Dendritic cell treated with granulocyte-macrophage colony-stimulating factor and Interleukin-4, amounts not matched to agents 40 ng/mL and 50 ng/mL, for 4 days (primary cell): ENCODE measurements at regions of chr16 and their contacts with region 1.

Region 1: DNA sequence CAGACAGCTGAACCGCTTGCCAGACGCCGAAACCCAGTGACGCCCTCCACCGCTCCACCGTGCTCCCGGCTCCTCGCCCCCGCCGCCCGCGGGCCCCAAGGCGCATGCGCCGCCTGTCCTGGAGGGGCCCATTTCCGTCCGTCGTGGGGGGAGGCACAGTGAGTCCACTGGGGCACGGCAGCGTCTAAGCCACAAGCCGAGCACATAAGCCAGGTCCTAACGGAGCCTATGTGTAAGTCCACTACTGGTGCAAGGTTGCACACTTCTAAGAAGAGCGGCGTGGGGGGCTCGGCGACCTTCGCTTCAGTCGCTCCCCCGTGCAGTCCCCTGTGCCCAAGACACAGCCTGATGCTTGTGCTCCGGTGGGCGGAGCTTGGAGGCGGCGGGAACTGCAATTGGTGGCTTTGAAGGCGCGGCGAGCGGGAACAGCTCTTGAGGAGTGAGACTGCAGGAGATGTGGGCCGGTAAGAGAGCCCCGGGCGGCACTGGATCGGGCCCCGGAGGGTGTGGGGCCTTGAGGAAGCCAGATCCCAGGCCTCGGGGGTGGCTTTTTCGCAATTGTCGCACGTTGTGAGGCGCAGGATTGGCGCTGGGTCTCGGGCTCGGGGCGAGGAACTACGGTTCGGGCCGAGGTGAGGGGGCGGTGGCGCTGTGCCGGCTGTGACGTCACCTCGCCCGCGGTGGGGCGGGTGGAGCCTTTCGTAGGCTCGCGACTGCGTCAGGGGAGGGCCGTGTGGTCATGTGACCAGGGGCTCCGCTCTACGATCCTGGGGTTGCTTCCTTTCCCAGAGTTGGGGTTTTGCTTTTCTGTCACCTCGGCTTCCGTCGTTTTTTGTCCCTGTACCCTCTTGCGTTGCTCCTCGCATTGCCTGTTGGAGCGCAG is at the starts of genes CENPN and CMC2:
- H3K4me3 Mint-ChIP-seq: peak within 1 kb of the TSS; percentile 96
- H3K27ac Mint-ChIP-seq: peak within 1 kb of the TSS; percentile 99
- H3K4me1 Mint-ChIP-seq: peaks cover 44% of the 10 kb centered on the region
- H3K27me3 Mint-ChIP-seq: no peaks in the 10 kb centered on the region

Region 2: GRCh38 chr16:80174418-80174817 is 832.6 kb before region 1 on chr16:
- intact Hi-C with region 1: no loop called
- H3K4me3 Mint-ChIP-seq: no peak overlapping the region
- H3K27ac Mint-ChIP-seq: no peak overlapping the region
- H3K4me1 Mint-ChIP-seq: no peaks in the 10 kb centered on the region
- H3K27me3 Mint-ChIP-seq: no peaks in the 10 kb centered on the region

Region 3: DNA sequence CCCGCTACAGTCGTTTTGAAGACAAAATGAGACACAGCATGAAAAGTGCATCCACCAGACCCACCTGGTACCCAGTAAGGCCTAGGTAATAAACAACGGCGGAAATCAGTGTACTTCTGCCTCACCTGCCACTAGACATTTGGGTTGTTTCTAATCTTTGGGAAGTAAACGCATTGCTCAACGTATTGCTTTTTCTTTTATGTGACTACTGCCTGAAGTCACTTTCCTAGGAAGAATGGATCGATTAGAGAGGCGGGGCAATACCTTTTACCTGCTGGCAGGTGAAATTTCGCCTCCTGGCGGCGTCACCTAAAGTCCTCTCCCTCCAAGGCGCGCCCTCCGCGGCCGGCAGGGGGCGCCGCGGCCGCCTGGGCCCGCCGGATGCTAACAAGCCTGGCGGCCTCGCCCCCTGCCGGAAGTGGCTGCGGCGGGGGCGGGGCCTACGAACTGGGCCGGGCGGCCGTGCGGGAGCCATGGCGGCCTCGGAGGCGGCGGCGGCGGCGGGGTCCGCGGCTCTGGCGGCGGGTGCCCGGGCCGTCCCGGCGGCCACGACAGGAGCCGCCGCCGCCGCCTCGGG is 28.4 kb after region 1 on chr16 and contains the start of gene ATMIN:
- intact Hi-C with region 1: loop called (anchors 2 kb)
- H3K4me3 Mint-ChIP-seq: peak within 1 kb of the TSS; percentile 78
- H3K27ac Mint-ChIP-seq: no peak within 1 kb of the TSS
- H3K4me1 Mint-ChIP-seq: peaks cover 40% of the 10 kb centered on the region
- H3K27me3 Mint-ChIP-seq: no peaks in the 10 kb centered on the region

Region 4: GRCh38 chr16:81085376-81085775 is 78.3 kb after region 1 on chr16:
- intact Hi-C with region 1: no loop called
- H3K4me3 Mint-ChIP-seq: no peak overlapping the region
- H3K27ac Mint-ChIP-seq: no peak overlapping the region
- H3K4me1 Mint-ChIP-seq: no peaks in the 10 kb centered on the region
- H3K27me3 Mint-ChIP-seq: no peaks in the 10 kb centered on the region

Region 5: DNA sequence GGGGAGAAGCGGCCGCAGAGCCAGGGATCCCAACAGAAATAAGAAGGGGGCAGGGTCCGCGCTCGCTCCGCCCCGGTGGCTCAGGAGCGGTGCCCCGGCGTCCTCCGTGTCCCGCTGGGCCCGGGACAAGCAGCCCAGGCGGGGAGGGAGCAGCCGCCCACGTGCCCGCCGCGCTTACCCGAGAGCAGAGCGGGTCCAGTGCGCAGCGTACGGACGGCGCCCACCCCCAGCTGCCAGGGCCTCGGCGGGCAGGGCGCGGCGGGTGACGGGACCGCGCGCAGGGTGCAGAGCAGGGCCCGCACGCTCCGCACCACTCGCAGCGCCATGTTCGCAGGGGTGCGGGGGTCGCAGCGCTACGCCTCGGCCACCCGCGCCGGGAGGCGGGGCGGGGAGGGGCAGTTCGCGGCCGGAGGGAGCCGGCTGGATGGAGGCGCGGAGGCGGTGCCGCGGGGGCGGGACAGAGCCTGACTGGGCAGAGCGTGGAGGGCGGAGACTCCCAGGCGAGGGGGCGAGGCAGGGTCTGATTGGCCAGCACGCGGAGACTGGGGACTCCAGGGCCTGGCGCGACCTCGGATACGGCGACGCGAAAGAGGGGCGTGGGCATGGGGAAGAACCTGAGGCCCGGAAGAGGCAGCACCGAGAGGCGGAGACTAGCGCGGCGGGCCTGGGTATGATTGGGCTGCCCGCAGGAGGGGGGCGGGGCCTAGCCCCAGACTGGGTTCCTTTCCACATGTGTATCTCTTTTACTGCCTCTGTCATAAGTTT is 89.1 kb after region 1 on chr16 and contains the start of gene GCSH:
- intact Hi-C with region 1: loop called (anchors 2 kb)
- H3K4me3 Mint-ChIP-seq: peak within 1 kb of the TSS; percentile 82
- H3K27ac Mint-ChIP-seq: peak within 1 kb of the TSS; percentile 27
- H3K4me1 Mint-ChIP-seq: peaks cover 12% of the 10 kb centered on the region
- H3K27me3 Mint-ChIP-seq: peaks cover 8% of the 10 kb centered on the region

Region 6: GRCh38 chr16:81314603-81315270 is 307.7 kb after region 1 on chr16 and contains the start of gene GAN:
- intact Hi-C with region 1: loop called (anchors 10 kb)
- H3K4me3 Mint-ChIP-seq: peak within 1 kb of the TSS; percentile 89
- H3K27ac Mint-ChIP-seq: peak within 1 kb of the TSS; percentile 79
- H3K4me1 Mint-ChIP-seq: peaks cover 33% of the 10 kb centered on the region
- H3K27me3 Mint-ChIP-seq: no peaks in the 10 kb centered on the region